Activated CD8-positive, alpha-beta memory T cell treated with anti-CD3 and anti-CD28 coated beads, Interleukin-2, amount 10 ng/mL, durations not matched to agents 7 days and 5 days (primary cell): ENCODE measurements at regions of chr11 and their contacts with region 1.

Region 1: GRCh38 chr11:128709402-128709801 is 15.5 kb downstream of the FLI1 start:
- DNase-seq: no peak
- ATAC-seq: no peak
- H3K4me3 Mint-ChIP-seq: no peak overlapping the region
- H3K27ac Mint-ChIP-seq: no peak overlapping the region
- H3K4me1 Mint-ChIP-seq: peaks cover 86% of the 10 kb centered on the region
- H3K27me3 Mint-ChIP-seq: no peaks in the 10 kb centered on the region

Region 2: DNA sequence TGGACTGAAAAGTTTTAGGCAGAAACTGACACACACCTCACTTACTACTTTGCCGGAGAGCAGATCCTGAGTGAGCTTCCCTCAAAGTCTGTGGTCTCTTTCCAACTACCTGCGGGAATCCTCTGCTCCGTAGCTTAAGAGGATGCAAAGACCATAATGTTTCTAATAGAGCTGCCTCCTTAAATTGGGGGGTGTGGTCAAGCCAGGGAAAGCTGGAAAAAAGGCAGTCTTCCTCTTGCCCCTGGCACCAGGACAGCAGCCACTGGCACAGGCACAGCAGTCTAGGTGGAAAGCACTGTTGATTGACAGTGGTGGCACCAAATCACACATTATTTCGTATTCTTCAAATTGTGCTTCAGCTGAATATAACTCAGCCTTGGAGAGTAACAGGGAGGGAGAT is 122.0 kb before region 1 on chr11 and contains the start of gene ETS1:
- CTCF ChIA-PET with region 1: no interaction called
- DNase-seq: no peak
- ATAC-seq: no peak
- H3K4me3 Mint-ChIP-seq: no peak within 1 kb of the TSS
- H3K27ac Mint-ChIP-seq: no peak within 1 kb of the TSS
- H3K4me1 Mint-ChIP-seq: peaks cover 3% of the 10 kb centered on the region
- H3K27me3 Mint-ChIP-seq: peaks cover 14% of the 10 kb centered on the region
- total RNA-seq, gene ETS1: 408 to 671 TPM

Region 3: DNA sequence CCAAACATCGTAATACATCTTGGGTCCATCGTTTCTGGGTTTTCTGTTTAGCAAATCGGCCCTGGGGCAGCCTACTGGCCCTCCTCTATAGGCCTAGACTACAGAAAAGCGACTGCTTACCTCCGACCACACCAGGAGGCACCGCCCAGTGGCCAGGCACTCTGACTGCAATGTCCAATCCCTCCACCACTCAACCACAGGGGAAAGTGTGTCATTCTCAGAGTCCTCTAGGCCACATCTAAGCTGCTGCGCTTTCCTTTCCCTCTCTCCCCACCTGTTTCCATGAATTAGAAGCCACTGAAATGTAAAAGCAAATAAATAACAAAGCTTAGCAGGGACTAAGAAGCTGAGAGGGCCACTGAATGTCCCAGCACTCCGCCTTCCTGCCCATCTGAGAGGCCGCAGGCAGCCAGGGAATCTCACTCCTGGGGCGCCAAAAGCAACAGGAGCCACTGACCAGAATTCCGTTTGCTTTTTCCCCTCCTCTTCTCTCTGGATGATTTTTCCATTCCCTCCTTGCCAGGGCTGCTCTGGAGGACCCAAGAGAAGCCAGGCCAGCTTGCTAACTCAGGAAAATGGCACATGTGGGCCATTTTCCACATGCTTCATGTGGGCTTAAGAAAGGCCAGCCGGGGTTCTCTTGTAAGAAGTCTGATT is 65.6 kb before region 1 on chr11:
- CTCF ChIA-PET with region 1: no interaction called
- DNase-seq: no peak
- ATAC-seq: no peak
- H3K4me3 Mint-ChIP-seq: no peak overlapping the region
- H3K27ac Mint-ChIP-seq: no peak overlapping the region
- H3K4me1 Mint-ChIP-seq: no peaks in the 10 kb centered on the region
- H3K27me3 Mint-ChIP-seq: peaks cover 18% of the 10 kb centered on the region

Region 4: GRCh38 chr11:128695539-128696221 is 13.7 kb before region 1 on chr11:
- CTCF ChIA-PET with region 1: interaction called, 12 read pairs
- DNase-seq: peak; percentile 71
- ATAC-seq: peak; percentile 40
- H3K4me3 Mint-ChIP-seq: peak overlapping the region; percentile 82
- H3K27ac Mint-ChIP-seq: peak overlapping the region; percentile 90
- H3K4me1 Mint-ChIP-seq: peaks cover 53% of the 10 kb centered on the region
- H3K27me3 Mint-ChIP-seq: peaks cover 15% of the 10 kb centered on the region